A549 (cell line): ENCODE measurements at regions of chr2 and their contacts with region 1.

Region 1: DNA sequence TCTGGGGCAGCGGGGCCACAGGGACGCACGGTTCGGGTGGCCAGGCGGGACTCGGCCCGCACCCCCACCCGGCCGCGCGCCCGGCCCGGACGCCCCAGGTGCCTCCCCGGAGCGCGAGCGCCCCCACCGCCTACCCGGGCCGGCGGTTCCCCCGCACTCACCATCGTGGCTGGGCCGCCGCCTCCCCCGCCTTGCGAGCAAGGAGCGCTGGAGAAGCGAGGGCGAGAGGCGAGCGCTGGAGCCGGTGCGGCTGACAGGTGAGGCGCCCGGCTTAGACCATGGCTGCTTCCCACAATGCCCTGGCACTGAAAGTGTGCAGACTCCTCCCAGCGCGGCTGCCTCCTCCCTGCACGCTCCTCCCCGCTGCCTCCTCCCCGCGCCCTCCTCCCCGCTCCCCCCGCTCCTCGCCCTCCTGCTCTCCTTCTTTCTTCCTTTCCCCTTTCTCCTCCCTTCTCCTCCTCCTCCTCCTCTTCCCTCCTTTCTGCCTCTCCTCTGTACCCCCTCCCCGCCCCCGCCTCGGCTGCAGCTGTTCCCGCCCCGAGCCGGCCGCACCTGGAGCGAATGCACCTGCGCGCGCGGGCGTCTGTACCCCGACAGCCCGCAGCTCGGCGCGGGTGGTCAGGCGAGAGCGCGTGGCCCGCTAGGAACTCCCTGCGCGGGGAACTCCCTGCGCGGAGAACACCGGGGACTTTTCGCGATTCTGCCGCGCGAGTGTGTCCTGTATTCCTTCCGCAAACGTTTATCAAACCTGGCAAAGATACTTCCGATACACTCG is at the start of gene AP1S3:
- DNase-seq: peak; percentile 80 to 87
- ATAC-seq: peak; percentile 95 to 97
- H3K4me3 ChIP-seq: peak within 1 kb of the TSS; percentile 96
- H3K27ac ChIP-seq: peak within 1 kb of the TSS; percentile 89 to 90
- H3K4me1 ChIP-seq: peaks cover 34% of the 10 kb centered on the region
- CTCF ChIP-seq: peak; percentile 28; the same call in 2 of the 3 replicates
- EP300 ChIP-seq: no peak
- POLR2A ChIP-seq: peak; percentile 72
- RAD21 ChIP-seq: peak in 1 of 2 experiments; percentile 40; a peak in 1 of 5 replicates
- polyA plus RNA-seq, gene AP1S3: 28.3 and 57.0 TPM in 2 replicates

Region 2: GRCh38 chr2:223779877-223780276 is 57.6 kb before region 1 on chr2:
- CTCF ChIA-PET with region 1: no interaction called
- POLR2A ChIA-PET with region 1: no interaction called
- DNase-seq: peak; percentile 50 to 66
- ATAC-seq: peak; percentile 59 to 72; a peak in 4 of 6 replicates
- H3K4me3 ChIP-seq: no peak overlapping the region
- H3K27ac ChIP-seq: peak overlapping the region in 1 of 2 experiments; percentile 53; a peak in 2 of 6 replicates
- H3K4me1 ChIP-seq: no peaks in the 10 kb centered on the region
- CTCF ChIP-seq: peak; percentile 39
- EP300 ChIP-seq: no peak
- POLR2A ChIP-seq: no peak
- RAD21 ChIP-seq: peak; percentile 46 to 51

Region 3: GRCh38 chr2:223853425-223853837 is 16.0 kb after region 1 on chr2:
- CTCF ChIA-PET with region 1: interaction called, 10 read pairs
- POLR2A ChIA-PET with region 1: no interaction called
- DNase-seq: no peak
- ATAC-seq: peak; percentile 28 to 60; a peak in 3 of 6 replicates
- H3K4me3 ChIP-seq: no peak overlapping the region
- H3K27ac ChIP-seq: peak overlapping the region; percentile 25 to 91; a peak in 4 of 6 replicates
- H3K4me1 ChIP-seq: peaks cover 43% of the 10 kb centered on the region
- CTCF ChIP-seq: no peak
- EP300 ChIP-seq: no peak
- POLR2A ChIP-seq: no peak
- RAD21 ChIP-seq: no peak

Region 4: GRCh38 chr2:223860809-223861738 is 23.6 kb after region 1 on chr2:
- CTCF ChIA-PET with region 1: interaction called, 17 read pairs
- POLR2A ChIA-PET with region 1: interaction called, 8 read pairs
- DNase-seq: peak; percentile 85 to 95
- ATAC-seq: peak; percentile 95 to 99
- H3K4me3 ChIP-seq: no peak overlapping the region
- H3K27ac ChIP-seq: peak overlapping the region; percentile 91 to 94
- H3K4me1 ChIP-seq: peaks cover 63% of the 10 kb centered on the region
- CTCF ChIP-seq: peak; percentile 16; the same call in 1 of the 3 replicates
- EP300 ChIP-seq: peak in 1 of 2 experiments; percentile 70; a peak in 2 of 5 replicates
- POLR2A ChIP-seq: no peak
- RAD21 ChIP-seq: peak; percentile 51 to 55; a peak in 4 of 5 replicates

Region 5: DNA sequence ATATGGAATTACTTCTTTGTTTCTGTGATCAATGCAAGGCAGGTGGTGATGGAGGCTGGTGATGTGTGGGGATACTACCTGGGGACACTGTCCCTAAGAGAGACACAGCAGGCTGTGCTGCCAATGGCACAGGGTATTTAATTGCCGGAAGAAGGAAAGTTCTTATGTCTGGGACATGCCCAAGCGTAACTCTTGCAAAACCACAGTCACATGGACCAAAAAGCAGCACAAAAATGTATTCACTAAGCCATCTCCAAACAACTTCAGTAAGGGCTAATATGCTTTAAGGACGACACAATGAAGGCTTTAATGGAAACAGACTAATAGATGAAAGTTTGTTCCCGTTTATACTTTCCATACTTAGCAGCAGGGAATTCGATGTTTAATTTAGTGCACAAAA is 49.7 kb after region 1 on chr2:
- CTCF ChIA-PET with region 1: no interaction called
- POLR2A ChIA-PET with region 1: no interaction called
- DNase-seq: no peak
- ATAC-seq: no peak
- H3K4me3 ChIP-seq: no peak overlapping the region
- H3K27ac ChIP-seq: peak overlapping the region; percentile 3 to 73; a peak in 5 of 6 replicates
- H3K4me1 ChIP-seq: peaks cover 16% of the 10 kb centered on the region
- CTCF ChIP-seq: no peak
- EP300 ChIP-seq: no peak
- POLR2A ChIP-seq: no peak
- RAD21 ChIP-seq: no peak

Region 6: GRCh38 chr2:223929571-223930102 is 92.2 kb after region 1 on chr2:
- CTCF ChIA-PET with region 1: no interaction called
- POLR2A ChIA-PET with region 1: no interaction called
- DNase-seq: no peak
- ATAC-seq: no peak; a peak in 1 of 6 replicates
- H3K4me3 ChIP-seq: no peak overlapping the region
- H3K27ac ChIP-seq: 0 out of 6 replicates have a peak overlapping the region, but pooled peaks of 1 of the 2 experiments have one; percentile 2
- H3K4me1 ChIP-seq: peaks cover 48% of the 10 kb centered on the region
- CTCF ChIP-seq: no peak
- EP300 ChIP-seq: no peak
- POLR2A ChIP-seq: no peak
- RAD21 ChIP-seq: no peak